CD8-positive, alpha-beta T cell (primary cell): ENCODE measurements at regions of chr2 and their contacts with region 1.

Region 1: GRCh38 chr2:191171708-191172355 is 21.0 kb upstream of the STAT4 start:
- DNase-seq: no peak
- ATAC-seq: no peak
- H3K4me3 ChIP-seq: no peak overlapping the region
- H3K4me3 Mint-ChIP-seq: no peak overlapping the region
- H3K27ac ChIP-seq: no peak overlapping the region
- H3K27ac Mint-ChIP-seq: no peak overlapping the region
- H3K4me1 ChIP-seq: peaks cover 8% of the 10 kb centered on the region
- H3K4me1 Mint-ChIP-seq: peaks cover 26% of the 10 kb centered on the region
- H3K27me3 ChIP-seq: no peaks in the 10 kb centered on the region
- H3K27me3 Mint-ChIP-seq: no peaks in the 10 kb centered on the region
- CTCF ChIP-seq: no peak

Region 2: DNA sequence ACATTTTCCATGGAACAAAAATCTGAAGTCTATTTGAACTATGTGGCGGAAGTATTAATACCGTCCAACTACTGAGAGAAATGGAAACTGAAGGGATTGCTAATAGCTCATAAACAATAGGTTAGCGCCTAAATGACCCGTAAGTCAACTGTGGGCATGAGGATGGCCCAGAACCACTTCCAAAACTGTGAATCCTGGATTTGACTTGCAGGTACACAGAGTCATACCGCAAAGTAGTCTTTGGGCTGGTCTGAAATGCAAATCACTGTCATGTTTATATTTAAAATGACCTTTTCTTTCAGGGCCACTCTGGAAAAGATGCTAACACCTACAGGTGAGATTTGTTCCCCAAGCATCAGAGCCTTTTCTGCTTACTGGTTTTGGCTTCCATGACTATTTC is 71.6 kb before region 1 on chr2:
- CTCF ChIA-PET with region 1: no interaction called
- POLR2A ChIA-PET with region 1: no interaction called
- intact Hi-C with region 1: no loop called
- DNase-seq: no peak
- ATAC-seq: no peak
- H3K4me3 ChIP-seq: no peak overlapping the region
- H3K4me3 Mint-ChIP-seq: no peak overlapping the region
- H3K27ac ChIP-seq: no peak overlapping the region
- H3K27ac Mint-ChIP-seq: no peak overlapping the region
- H3K4me1 ChIP-seq: no peaks in the 10 kb centered on the region
- H3K4me1 Mint-ChIP-seq: peaks cover 52% of the 10 kb centered on the region
- H3K27me3 ChIP-seq: no peaks in the 10 kb centered on the region
- H3K27me3 Mint-ChIP-seq: no peaks in the 10 kb centered on the region
- CTCF ChIP-seq: no peak

Region 3: DNA sequence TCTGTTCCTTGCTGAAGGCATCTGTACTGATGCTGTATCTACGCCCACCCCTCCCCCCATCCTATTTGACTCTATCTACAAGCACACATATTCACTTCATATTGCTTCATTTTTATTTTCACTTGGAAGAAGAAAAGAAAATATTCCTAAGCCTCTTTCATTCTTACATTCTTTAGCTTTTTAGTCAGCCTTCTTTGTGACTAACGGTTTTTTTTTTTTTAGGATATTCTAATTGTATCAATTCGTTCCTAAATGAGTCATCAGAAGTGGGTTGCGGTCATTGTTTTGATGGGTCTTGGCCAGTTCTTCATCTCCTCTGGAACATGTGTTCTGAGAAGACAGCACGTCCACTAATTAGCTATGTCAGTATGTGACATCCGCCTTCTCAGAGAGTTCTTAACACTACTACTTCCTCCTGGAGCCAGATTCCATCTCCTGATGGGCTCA is 162.1 kb after region 1 on chr2:
- CTCF ChIA-PET with region 1: no interaction called
- POLR2A ChIA-PET with region 1: no interaction called
- intact Hi-C with region 1: no loop called
- DNase-seq: no peak
- ATAC-seq: no peak
- H3K4me3 ChIP-seq: no peak overlapping the region
- H3K4me3 Mint-ChIP-seq: no peak overlapping the region
- H3K27ac ChIP-seq: no peak overlapping the region
- H3K27ac Mint-ChIP-seq: no peak overlapping the region
- H3K4me1 ChIP-seq: no peaks in the 10 kb centered on the region
- H3K4me1 Mint-ChIP-seq: no peaks in the 10 kb centered on the region
- H3K27me3 ChIP-seq: no peaks in the 10 kb centered on the region
- H3K27me3 Mint-ChIP-seq: no peaks in the 10 kb centered on the region
- CTCF ChIP-seq: no peak

Region 4: GRCh38 chr2:191521608-191522208 is 349.9 kb after region 1 on chr2:
- CTCF ChIA-PET with region 1: interaction called, 45 read pairs
- POLR2A ChIA-PET with region 1: no interaction called
- intact Hi-C with region 1: no loop called
- DNase-seq: peak in 2 of 9 experiments; percentile 32 to 48
- ATAC-seq: no peak
- H3K4me3 ChIP-seq: no peak overlapping the region
- H3K4me3 Mint-ChIP-seq: no peak overlapping the region
- H3K27ac ChIP-seq: no peak overlapping the region
- H3K27ac Mint-ChIP-seq: no peak overlapping the region
- H3K4me1 ChIP-seq: no peaks in the 10 kb centered on the region
- H3K4me1 Mint-ChIP-seq: no peaks in the 10 kb centered on the region
- H3K27me3 ChIP-seq: no peaks in the 10 kb centered on the region
- H3K27me3 Mint-ChIP-seq: peaks cover 3% of the 10 kb centered on the region
- CTCF ChIP-seq: peak; percentile 69